AG04449 (cell line): ENCODE measurements at regions of chr6 and their contacts with region 1.

Region 1: DNA sequence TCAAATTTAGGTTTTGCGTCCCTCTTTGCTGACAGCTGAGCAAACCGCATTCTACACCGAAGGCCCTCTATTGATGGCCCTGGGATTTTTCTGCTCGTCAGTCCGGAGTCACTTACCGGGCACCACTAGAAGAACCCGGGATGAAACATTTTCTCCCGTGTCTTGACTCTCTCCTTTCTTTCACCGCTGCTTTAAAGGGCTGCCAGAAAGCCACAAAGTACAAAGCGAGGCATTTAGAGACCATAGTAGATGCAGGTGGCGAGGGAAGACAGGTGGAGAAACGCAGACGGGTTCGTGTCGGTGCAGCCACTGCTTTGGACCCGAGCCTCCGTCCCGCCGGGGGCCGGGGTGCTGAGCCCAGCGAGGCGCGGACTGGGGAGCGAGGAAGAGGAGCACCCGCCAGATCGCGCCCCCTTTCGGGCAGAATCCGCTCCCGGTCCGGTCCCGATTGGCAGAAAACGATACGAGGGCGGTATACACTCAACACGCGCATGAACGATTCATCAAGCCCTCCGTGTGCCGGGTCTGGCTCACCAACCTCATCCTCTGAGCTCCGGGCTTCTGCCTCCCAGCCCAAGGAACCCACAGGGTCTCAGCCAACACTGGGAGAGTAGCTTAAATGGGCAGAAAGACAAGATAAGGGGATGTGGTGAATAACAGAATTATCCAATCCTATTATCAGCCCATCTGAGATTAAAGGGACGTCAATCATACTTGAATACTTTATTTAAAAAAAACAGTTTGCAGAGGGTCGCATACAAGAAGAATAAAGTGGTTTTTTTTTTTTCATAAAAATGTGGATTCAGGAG is 84.9 kb downstream of the TRIM27 start:
- DNase-seq: no peak
- H3K4me3 ChIP-seq: peak overlapping the region; percentile 81
- CTCF ChIP-seq: peak; percentile 87

Region 2: GRCh38 chr6:28824793-28825731 is 13.8 kb before region 1 on chr6:
- CTCF ChIA-PET with region 1: interaction called, 18 read pairs
- POLR2A ChIA-PET with region 1: no interaction called
- DNase-seq: no peak
- H3K4me3 ChIP-seq: peak overlapping the region; percentile 37
- CTCF ChIP-seq: no peak

Region 3: GRCh38 chr6:28863604-28864320 is 24.9 kb after region 1 on chr6:
- CTCF ChIA-PET with region 1: interaction called, 44 read pairs
- POLR2A ChIA-PET with region 1: no interaction called
- DNase-seq: no peak
- H3K4me3 ChIP-seq: peak overlapping the region; percentile 83
- CTCF ChIP-seq: peak; percentile 26

Region 4: DNA sequence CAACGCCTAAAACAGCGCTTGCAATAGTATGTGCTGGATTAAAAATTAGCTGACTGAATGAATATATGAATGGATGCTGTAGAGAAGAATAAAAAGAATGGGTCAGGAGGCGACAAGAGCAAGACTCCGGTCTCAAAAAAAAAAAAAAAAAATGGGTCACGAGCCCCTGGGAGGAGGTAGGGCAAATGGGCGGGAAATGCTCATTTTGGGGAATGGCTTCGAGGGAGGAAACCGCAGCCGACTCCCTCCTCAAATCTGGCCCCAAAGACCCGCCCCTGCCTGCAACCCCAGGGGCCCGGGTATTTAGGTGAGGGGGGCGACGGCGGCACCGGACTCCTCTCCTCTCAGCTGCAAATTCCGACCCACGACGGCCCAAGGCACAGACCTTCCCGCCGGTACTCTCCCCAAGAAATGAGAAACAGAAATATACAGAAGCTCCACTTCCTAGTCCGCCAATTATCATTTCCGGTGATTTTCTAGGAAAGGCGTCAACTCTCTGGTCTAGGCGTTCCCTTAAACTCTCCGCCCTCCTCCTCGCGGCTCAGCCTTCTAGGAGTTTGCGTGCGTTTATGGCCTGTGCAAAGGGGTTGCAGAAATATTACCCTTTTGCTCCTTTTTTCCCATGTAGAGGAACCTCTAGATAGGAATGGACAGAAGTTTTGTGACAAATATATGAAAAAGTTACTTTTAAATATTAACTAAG is 166.5 kb after region 1 on chr6 and contains the start of gene ZNF311:
- CTCF ChIA-PET with region 1: no interaction called
- POLR2A ChIA-PET with region 1: no interaction called
- DNase-seq: no peak
- H3K4me3 ChIP-seq: peak within 1 kb of the TSS; percentile 56
- CTCF ChIP-seq: no peak